Mammary epithelial cell (primary cell): ENCODE measurements at regions of chr7 and their contacts with region 1.

Region 1: GRCh38 chr7:121547544-121548092 is 151.5 kb upstream of the FAM3C start:
- DNase-seq: peak; percentile 50
- H3K4me3 ChIP-seq: no peak overlapping the region
- H3K27ac ChIP-seq: no peak overlapping the region
- H3K4me1 ChIP-seq: peaks cover 15% of the 10 kb centered on the region
- H3K27me3 ChIP-seq: no peaks in the 10 kb centered on the region
- CTCF ChIP-seq: peak; percentile 68 to 78

Region 2: DNA sequence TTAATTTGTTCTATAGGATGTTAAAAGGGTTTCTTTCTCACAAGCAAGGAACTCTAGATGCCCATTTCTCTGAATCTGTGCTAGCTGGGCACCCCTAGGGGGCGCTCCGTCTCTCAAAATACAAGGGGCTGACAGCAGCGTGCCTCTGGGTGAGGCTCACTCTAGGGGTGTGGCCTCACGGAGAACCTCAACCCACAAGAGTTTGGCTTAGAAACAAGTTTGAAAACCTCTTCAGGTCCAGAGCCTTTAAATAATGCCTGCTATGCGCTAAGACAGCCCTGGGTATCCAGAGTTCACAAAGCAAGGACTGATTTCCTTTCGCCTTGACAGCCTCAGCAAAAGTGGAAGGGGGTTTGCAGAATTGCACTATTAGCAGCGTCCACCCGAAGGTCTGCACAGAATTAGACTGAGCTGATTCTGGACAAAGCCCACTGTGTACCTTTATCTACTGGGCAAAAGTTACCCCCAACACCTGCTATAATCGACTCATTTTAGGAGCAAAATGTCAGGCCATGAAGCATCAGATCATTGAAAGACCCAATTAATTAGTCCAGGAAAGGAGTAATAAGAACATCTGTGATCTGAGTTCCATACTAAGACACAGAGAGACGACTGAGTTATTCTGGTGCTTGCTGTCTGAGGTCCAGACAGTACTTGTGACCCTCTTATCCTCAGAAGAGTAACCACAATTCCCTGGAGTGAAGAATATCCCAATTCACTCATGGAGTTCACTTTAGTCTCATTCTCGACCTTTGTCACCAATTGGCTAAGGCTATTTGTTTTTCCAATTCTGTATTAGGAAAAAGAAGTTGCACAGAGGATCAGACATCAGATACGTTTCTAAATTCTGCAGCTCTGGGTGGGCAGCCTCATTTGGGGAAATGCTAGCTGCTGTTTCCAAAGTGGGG is 559.7 kb before region 1 on chr7:
- CTCF ChIA-PET with region 1: no interaction called
- dilution Hi-C with region 1: no loop called
- in situ Hi-C with region 1: no loop called
- intact Hi-C with region 1: loop called (anchors 10 kb)
- DNase-seq: peak; percentile 77
- H3K4me3 ChIP-seq: peak overlapping the region; percentile 32 to 40 (median 36)
- H3K27ac ChIP-seq: no peak overlapping the region
- H3K4me1 ChIP-seq: peaks cover 12% of the 10 kb centered on the region
- H3K27me3 ChIP-seq: no peaks in the 10 kb centered on the region
- CTCF ChIP-seq: peak; percentile 94 to 95

Region 3: GRCh38 chr7:121329191-121330052 is 218.2 kb before region 1 on chr7:
- CTCF ChIA-PET with region 1: no interaction called
- dilution Hi-C with region 1: no loop called
- in situ Hi-C with region 1: no loop called
- intact Hi-C with region 1: loop called (anchors 1 kb)
- DNase-seq: peak; percentile 37
- H3K4me3 ChIP-seq: peak overlapping the region; percentile 40 to 45 (median 41)
- H3K27ac ChIP-seq: no peak overlapping the region
- H3K4me1 ChIP-seq: peaks cover 16% of the 10 kb centered on the region
- H3K27me3 ChIP-seq: peaks cover 4% of the 10 kb centered on the region
- CTCF ChIP-seq: peak in 1 of 2 donors; percentile 46

Region 4: GRCh38 chr7:121395961-121396757 is 151.5 kb before region 1 on chr7 and contains the start of gene FAM3C:
- CTCF ChIA-PET with region 1: interaction called, 9 read pairs
- dilution Hi-C with region 1: loop called (anchors 25 kb)
- in situ Hi-C with region 1: loop called in 1 of 2 experiments (anchors 10 kb)
- intact Hi-C with region 1: loop called (anchors 1 kb)
- DNase-seq: peak; percentile 90
- H3K4me3 ChIP-seq: peak within 1 kb of the TSS; percentile 80 to 87 (median 84)
- H3K27ac ChIP-seq: peak within 1 kb of the TSS; percentile 75
- H3K4me1 ChIP-seq: peaks cover 16% of the 10 kb centered on the region
- H3K27me3 ChIP-seq: no peaks in the 10 kb centered on the region
- CTCF ChIP-seq: peak; percentile 46 to 76
- total RNA-seq, gene FAM3C: 80.5 to 107 TPM

Region 5: GRCh38 chr7:121519548-121520521 is 27.8 kb before region 1 on chr7:
- CTCF ChIA-PET with region 1: no interaction called
- dilution Hi-C with region 1: no loop called
- in situ Hi-C with region 1: no loop called
- intact Hi-C with region 1: loop called (anchors 1 kb)
- DNase-seq: no peak
- H3K4me3 ChIP-seq: no peak overlapping the region
- H3K27ac ChIP-seq: no peak overlapping the region
- H3K4me1 ChIP-seq: peaks cover 15% of the 10 kb centered on the region
- H3K27me3 ChIP-seq: no peaks in the 10 kb centered on the region
- CTCF ChIP-seq: no peak

Region 6: GRCh38 chr7:121994625-121995410 is 447.2 kb after region 1 on chr7:
- CTCF ChIA-PET with region 1: interaction called, 14 read pairs
- dilution Hi-C with region 1: no loop called
- in situ Hi-C with region 1: no loop called
- intact Hi-C with region 1: loop called (anchors 1 kb)
- DNase-seq: peak; percentile 69
- H3K4me3 ChIP-seq: no peak overlapping the region
- H3K27ac ChIP-seq: no peak overlapping the region
- H3K4me1 ChIP-seq: no peaks in the 10 kb centered on the region
- H3K27me3 ChIP-seq: no peaks in the 10 kb centered on the region
- CTCF ChIP-seq: peak; percentile 82 to 93